ENCODE measurements at regions of chr15 and their contacts with region 1.

Region 1: GRCh38 chr15:38647683-38648082 is 83.1 kb upstream of the RASGRP1 start:
- DNase-seq: no peak
- ATAC-seq: no peak
- H3K4me3 ChIP-seq: no peak overlapping the region
- H3K4me3 Mint-ChIP-seq: peak overlapping the region in 1 of 3 donors; percentile 41
- H3K27ac ChIP-seq: peak overlapping the region; percentile 43
- H3K27ac Mint-ChIP-seq: peak overlapping the region; percentile 98
- H3K4me1 ChIP-seq: peaks cover 50 to 63% of the 10 kb centered on the region in 2 experiments
- H3K4me1 Mint-ChIP-seq: peaks cover 75 to 84% (median 79%) of the 10 kb centered on the region in 3 donors
- H3K27me3 ChIP-seq: no peaks in the 10 kb centered on the region
- H3K27me3 Mint-ChIP-seq: no peaks in the 10 kb centered on the region

Region 2: DNA sequence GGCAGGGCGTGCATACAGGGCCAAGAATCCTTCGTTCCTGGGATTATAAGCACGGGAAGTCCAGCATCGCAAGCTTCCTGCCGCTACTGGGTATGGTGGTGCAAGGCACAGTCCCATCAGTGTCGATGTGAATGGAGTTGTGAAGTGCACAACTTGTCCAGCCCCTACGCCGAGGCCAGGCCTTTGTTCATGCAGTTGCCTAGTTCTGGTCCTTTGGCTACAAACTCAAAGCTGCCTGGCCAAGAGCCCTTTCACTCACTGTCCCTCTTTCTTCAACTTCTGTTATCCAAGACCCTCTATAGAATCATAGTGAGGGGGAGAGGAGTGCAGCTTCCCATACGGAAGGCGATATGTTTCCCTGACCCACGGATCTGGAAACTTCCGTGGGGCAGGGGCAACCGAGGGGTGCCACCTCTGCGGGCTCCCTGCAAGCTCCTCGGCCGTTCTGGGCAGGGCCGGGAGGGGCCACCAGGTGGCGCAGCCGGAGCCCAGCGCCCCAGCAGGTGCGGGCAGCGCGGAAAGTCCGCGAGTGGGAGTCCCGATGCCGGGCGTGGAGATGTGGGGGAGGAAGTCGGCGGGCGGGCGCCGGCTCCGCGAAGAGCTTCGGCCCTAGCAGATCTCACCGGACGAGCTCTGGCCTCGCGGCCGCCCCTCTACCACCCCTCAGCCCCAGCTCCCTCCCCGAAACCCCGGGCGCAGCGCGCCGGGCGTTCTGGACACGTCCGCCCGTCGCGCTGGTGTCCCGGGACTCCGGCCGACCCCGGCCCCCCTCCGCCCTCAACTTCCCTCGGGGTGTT is 83.8 kb before region 1 on chr15:
- CTCF ChIA-PET with region 1: interaction called, 14 to 44 read pairs
- POLR2A ChIA-PET with region 1: interaction called, 6 to 7 read pairs
- DNase-seq: peak; percentile 65 to 92 (median 82)
- ATAC-seq: peak; percentile 75 to 77 (median 76)
- H3K4me3 ChIP-seq: peak overlapping the region; percentile 90
- H3K4me3 Mint-ChIP-seq: peak overlapping the region; percentile 87 to 96 (median 88)
- H3K27ac ChIP-seq: peak overlapping the region; percentile 83
- H3K27ac Mint-ChIP-seq: peak overlapping the region; percentile 94 to 98
- H3K4me1 ChIP-seq: peaks cover 40 to 51% of the 10 kb centered on the region in 2 experiments
- H3K4me1 Mint-ChIP-seq: peaks cover 58 to 65% (median 64%) of the 10 kb centered on the region in 3 donors
- H3K27me3 ChIP-seq: no peaks in the 10 kb centered on the region
- H3K27me3 Mint-ChIP-seq: no peaks in the 10 kb centered on the region

Region 3: DNA sequence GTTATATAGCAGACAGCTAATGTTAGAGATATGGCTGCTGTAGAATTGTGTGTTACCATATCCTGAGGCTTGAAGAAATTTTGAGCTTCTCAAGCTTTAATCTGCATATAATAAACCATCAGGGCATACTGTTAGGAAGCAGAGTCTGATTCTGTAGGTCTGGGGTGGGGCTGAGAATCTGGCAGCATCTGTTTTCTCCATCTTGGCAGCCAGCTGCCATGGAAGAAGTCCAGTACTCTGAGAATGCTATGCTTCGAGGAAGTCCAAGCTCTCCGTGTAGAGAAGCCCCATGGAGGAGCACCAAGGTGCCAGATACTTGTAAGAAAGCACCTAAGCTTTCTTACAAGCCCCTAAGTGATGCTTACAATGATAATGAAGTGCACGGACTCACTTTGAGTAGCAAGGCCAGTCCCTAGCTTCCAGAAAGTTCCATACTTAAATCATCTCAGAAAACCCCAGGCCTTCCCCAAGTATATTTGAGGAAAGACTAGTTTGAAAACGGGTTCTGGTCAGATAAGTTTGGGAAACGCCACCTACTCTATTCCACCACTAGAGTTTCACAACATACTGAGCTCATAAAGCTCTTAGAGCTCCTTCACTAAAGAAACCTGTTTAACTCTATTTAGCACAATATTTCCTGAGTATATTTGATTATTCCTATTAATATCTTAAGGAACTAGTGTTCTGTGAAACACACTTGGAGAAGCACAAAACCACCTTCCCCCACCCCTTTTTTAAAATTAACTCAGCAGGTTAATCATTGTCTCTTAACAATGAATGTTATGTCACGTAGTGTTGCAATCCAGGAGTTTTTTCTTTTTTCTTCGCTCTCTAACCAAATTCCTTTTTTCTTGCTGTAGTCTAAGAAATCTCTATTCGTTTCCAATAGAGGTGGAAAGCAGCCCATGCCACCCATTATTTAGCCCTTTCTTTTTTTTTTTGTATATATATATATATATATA is 23.2 kb before region 1 on chr15:
- CTCF ChIA-PET with region 1: interaction called, 3 to 16 read pairs
- POLR2A ChIA-PET with region 1: no interaction called
- DNase-seq: no peak
- ATAC-seq: no peak
- H3K4me3 ChIP-seq: no peak overlapping the region
- H3K4me3 Mint-ChIP-seq: no peak overlapping the region
- H3K27ac ChIP-seq: no peak overlapping the region
- H3K27ac Mint-ChIP-seq: no peak overlapping the region
- H3K4me1 ChIP-seq: peaks cover 14 to 19% of the 10 kb centered on the region in 2 experiments
- H3K4me1 Mint-ChIP-seq: peaks cover 23 to 42% (median 37%) of the 10 kb centered on the region in 3 donors
- H3K27me3 ChIP-seq: no peaks in the 10 kb centered on the region
- H3K27me3 Mint-ChIP-seq: no peaks in the 10 kb centered on the region

Region 4: GRCh38 chr15:38660738-38661137 is 13.1 kb after region 1 on chr15:
- CTCF ChIA-PET with region 1: interaction called, 6 to 10 read pairs
- POLR2A ChIA-PET with region 1: interaction called, 3 to 9 read pairs
- DNase-seq: peak in 7 of 35 experiments; percentile 5 to 40 (median 20)
- ATAC-seq: peak; percentile 44 to 63 (median 58)
- H3K4me3 ChIP-seq: no peak overlapping the region
- H3K4me3 Mint-ChIP-seq: peak overlapping the region in 2 of 3 donors; percentile 29 to 59
- H3K27ac ChIP-seq: peak overlapping the region; percentile 48
- H3K27ac Mint-ChIP-seq: peak overlapping the region; percentile 90 to 92
- H3K4me1 ChIP-seq: peaks cover 32 to 52% of the 10 kb centered on the region in 2 experiments
- H3K4me1 Mint-ChIP-seq: peaks cover 70 to 74% (median 73%) of the 10 kb centered on the region in 3 donors
- H3K27me3 ChIP-seq: no peaks in the 10 kb centered on the region
- H3K27me3 Mint-ChIP-seq: no peaks in the 10 kb centered on the region

Region 5: DNA sequence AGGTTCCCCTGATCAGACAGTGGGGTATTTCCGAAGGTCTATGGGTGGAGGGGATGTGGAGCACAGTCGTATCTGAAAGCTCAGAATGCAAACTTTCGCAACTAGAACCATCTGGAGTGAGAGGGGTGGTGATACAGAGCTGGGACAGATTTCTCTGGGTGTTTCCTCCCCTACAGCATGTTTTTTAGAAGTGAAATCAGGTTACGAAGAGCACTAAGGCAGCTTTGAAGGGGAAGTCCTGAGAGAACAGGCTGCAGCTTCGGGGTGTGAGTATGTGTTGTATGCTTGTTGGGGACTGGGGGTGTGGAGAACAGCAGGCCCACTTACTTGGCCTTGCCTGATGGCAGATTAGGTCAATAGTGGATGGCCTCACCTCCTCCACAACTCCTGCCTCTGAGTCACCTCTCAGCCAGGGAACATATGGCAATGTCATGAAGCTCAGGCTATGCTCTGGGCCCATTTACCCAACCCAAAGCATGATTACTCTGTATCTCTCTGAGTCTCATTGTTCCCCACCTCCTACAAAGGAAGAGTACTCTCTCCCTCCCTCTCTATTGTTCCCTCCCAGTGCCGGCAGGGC is 24.1 kb after region 1 on chr15:
- CTCF ChIA-PET with region 1: interaction called in 1 of 2 experiments, 58 read pairs
- POLR2A ChIA-PET with region 1: interaction called, 5 to 21 read pairs
- DNase-seq: peak in 31 of 35 experiments; percentile 22 to 88 (median 65)
- ATAC-seq: peak; percentile 47 to 78 (median 50)
- H3K4me3 ChIP-seq: no peak overlapping the region
- H3K4me3 Mint-ChIP-seq: peak overlapping the region; percentile 40 to 64 (median 47)
- H3K27ac ChIP-seq: peak overlapping the region; percentile 98
- H3K27ac Mint-ChIP-seq: peak overlapping the region; percentile 95 to 98
- H3K4me1 ChIP-seq: peaks cover 55 to 62% of the 10 kb centered on the region in 2 experiments
- H3K4me1 Mint-ChIP-seq: peaks cover 72 to 86% (median 78%) of the 10 kb centered on the region in 3 donors
- H3K27me3 ChIP-seq: no peaks in the 10 kb centered on the region
- H3K27me3 Mint-ChIP-seq: no peaks in the 10 kb centered on the region

Region 6: DNA sequence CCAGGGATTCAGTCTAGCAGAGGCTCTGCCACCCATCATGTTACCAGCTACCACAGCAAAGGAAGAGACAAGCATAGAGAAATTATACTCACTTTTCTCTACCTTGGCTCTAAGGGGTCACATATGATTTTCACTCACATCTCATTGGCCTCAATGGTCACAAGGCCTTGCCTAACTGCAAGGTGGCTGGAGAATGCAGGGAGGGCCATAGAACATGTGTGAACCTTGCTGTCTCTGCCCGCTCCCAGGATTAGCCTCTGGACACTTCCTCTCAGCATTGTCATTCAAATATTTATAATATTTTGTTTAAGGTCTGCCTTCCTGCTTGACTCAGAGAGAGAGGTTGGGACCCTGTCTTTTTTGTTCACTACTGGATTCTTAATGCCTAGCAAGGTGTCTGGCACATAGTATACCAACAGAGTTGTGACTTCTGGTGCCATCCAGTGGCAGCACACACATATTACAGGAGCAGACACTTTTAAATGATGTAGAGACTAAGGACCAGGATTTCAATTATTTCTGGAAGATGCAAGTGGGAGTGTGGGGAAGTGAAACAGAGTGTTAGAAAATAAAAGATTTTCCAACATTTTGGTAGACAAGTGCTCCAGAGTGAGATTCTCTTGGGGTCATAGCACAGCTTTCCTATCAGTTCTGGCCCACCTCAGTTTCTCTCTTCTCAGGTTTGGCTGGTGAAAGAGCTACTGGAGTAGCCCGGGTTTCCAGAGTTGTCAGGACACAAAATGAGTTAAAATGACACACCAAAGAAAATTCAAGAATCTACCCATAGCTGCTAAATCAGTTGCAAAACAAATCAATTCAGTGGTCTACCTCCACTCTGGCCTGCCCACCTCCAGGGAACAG is 35.9 kb after region 1 on chr15:
- CTCF ChIA-PET with region 1: interaction called, 12 to 90 read pairs
- POLR2A ChIA-PET with region 1: interaction called, 9 to 11 read pairs
- DNase-seq: peak in 34 of 35 experiments; percentile 46 to 88 (median 67)
- ATAC-seq: peak; percentile 47 to 60 (median 50)
- H3K4me3 ChIP-seq: no peak overlapping the region
- H3K4me3 Mint-ChIP-seq: peak overlapping the region in 2 of 3 donors; percentile 57 to 68
- H3K27ac ChIP-seq: peak overlapping the region; percentile 67
- H3K27ac Mint-ChIP-seq: peak overlapping the region; percentile 91 to 98
- H3K4me1 ChIP-seq: peaks cover 59 to 60% of the 10 kb centered on the region in 2 experiments
- H3K4me1 Mint-ChIP-seq: peaks cover 69 to 86% (median 85%) of the 10 kb centered on the region in 3 donors
- H3K27me3 ChIP-seq: no peaks in the 10 kb centered on the region
- H3K27me3 Mint-ChIP-seq: no peaks in the 10 kb centered on the region

Measured in T-cell (primary cell).